ENCODE measurements at regions of chr10 and their contacts with region 1.

Region 1: DNA sequence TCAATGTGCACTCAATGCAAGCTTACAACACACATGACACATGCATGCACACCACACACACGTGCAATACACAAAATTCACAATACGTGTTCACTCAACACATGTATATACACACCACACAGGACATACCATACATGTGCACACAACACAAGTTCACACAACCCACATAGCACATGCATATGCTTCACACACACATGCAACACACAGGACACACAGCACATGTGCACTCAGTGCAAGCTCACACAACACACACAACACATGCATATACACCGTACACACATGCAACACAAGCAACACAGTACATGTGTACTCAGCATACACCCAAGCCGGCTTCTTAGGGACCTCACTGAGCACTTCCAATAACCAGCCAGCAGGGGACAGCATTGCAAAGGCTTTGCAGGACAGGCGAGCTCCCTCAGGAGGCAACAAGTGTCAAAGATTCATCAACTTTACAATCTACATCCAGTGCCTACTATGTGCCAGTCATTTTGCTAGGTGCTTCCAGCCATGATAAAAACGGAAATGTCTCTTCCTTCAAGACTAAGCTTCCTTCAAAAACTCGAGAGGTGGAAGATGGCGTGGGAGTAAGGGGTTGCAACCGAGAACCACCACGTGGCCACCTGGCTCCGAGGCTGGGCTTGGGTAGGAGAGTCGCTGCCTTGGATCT is 61.1 kb downstream of the JCAD start:
- DNase-seq: peak; percentile 68
- H3K4me3 ChIP-seq: no peak overlapping the region
- H3K27ac ChIP-seq: no peak overlapping the region
- H3K4me1 ChIP-seq: no peaks in the 10 kb centered on the region
- H3K27me3 ChIP-seq: no peaks in the 10 kb centered on the region
- CTCF ChIP-seq: peak; percentile 100

Region 2: DNA sequence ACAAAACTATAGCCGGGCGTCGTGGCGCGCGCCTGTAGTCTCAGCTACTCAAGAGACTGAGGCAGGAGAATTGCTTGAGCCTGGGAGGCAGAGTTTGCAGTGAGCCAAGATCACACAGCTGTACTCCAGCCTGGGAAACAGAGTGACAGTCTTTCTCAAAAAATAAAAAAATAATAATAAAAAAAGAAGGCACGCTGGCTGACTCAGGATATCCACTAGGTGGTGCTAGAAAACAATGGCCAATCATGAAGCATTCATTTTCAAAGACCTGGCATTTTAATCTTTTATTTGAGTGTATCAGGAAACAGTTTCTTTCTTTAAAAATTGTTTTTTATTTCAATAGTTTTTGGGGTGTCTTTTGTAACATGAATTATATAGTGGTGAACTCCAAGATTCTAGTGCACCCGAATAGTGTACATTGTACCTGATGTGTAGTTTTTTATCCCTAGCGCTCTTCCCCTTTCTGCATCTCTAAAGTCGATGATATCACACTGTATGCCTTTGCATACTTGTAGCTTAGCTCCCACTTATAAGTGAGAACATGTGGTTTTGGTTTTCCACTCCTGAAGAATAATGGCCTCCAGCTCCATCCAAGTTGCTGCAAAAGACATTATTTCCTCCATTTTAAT is 620.8 kb before region 1 on chr10:
- CTCF ChIA-PET with region 1: no interaction called
- dilution Hi-C with region 1: no loop called
- in situ Hi-C with region 1: no loop called
- intact Hi-C with region 1: loop called (anchors 5 kb)
- DNase-seq: peak; percentile 8
- H3K4me3 ChIP-seq: no peak overlapping the region
- H3K27ac ChIP-seq: no peak overlapping the region
- H3K4me1 ChIP-seq: no peaks in the 10 kb centered on the region
- H3K27me3 ChIP-seq: no peaks in the 10 kb centered on the region
- CTCF ChIP-seq: peak; percentile 75 to 76

Region 3: DNA sequence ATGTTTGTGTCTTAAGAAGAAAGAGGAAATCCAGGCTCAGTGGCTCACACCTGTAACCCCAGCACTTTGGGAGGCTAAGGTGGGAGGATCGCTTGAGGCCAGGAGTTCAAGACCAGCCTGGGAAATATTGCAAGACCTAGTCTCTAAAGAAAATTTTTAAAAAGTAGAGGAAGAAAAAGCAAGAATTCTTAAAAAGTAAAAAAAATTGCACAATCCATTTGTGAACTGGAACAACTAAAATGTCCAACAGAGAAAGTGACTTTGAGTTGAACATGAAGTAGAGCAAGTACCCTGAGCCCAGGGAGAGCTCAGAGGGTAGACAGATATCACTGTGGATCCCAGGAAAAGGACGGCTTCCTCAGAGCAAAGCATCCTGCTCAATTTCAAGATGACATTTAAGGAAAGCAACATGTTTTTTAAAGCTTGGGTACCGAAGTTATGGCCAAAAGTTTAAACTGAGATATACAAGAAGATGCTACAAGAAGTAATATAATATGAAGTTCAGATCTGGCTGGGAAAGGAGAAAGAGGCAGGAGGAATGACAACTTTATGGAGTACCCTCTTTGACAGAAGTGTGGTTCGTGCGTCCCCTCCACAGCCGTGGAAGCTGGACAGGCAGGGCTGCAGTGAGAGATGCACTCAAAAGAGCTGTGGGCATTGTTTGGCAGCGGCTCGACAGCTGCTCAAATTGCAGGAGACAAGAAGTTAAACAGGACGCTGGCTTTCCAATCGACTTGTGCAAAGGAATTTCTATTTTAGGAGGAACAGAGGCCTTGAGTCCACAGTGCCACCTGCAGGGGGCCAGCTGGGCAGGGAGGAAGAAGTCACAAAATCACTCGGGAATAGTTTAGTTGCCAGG is 140.2 kb before region 1 on chr10:
- CTCF ChIA-PET with region 1: no interaction called
- dilution Hi-C with region 1: no loop called
- in situ Hi-C with region 1: no loop called
- intact Hi-C with region 1: loop called (anchors 1 kb)
- DNase-seq: peak; percentile 84
- H3K4me3 ChIP-seq: no peak overlapping the region
- H3K27ac ChIP-seq: no peak overlapping the region
- H3K4me1 ChIP-seq: peaks cover 40% of the 10 kb centered on the region
- H3K27me3 ChIP-seq: no peaks in the 10 kb centered on the region
- CTCF ChIP-seq: peak; percentile 74 to 91

Region 4: DNA sequence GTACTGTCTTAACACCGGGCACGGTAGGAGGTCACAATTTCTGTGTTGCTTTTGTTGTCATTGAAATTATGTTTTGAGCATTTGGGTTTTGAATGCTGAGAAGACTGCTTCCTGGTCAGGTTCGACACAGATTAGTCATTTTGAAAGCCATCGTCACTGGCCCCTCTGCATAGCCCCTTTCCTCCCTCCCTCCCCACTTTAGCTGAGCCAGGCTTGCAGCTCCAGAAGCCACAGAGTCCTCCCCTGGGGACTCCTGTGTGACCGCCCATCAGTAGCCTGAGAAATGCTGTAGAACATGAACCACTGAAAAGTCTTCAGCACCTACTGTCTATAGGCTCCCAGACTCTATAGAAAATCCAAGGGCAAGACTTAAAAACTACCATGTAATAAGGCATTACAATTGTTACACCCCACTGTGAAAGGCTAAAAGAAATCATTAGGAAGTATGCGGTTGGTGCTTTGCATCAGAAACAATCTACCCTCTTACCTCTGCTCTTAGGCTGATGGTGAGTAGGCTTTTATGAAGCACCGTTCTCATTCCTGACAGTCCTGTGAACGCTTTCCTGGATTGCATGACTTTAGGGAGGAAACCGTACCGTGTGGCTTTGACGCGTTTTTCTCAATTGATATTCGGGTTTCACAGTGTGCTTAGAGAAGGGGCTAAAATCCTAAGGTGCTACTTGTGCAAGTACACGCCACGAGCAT is 36.3 kb after region 1 on chr10:
- CTCF ChIA-PET with region 1: no interaction called
- dilution Hi-C with region 1: no loop called
- in situ Hi-C with region 1: no loop called
- intact Hi-C with region 1: no loop called
- DNase-seq: no peak
- H3K4me3 ChIP-seq: no peak overlapping the region
- H3K27ac ChIP-seq: no peak overlapping the region
- H3K4me1 ChIP-seq: no peaks in the 10 kb centered on the region
- H3K27me3 ChIP-seq: no peaks in the 10 kb centered on the region
- CTCF ChIP-seq: no peak

Region 5: GRCh38 chr10:30080161-30080560 is 81.9 kb after region 1 on chr10:
- CTCF ChIA-PET with region 1: no interaction called
- dilution Hi-C with region 1: no loop called
- in situ Hi-C with region 1: no loop called
- intact Hi-C with region 1: no loop called
- DNase-seq: peak; percentile 30
- H3K4me3 ChIP-seq: no peak overlapping the region
- H3K27ac ChIP-seq: no peak overlapping the region
- H3K4me1 ChIP-seq: no peaks in the 10 kb centered on the region
- H3K27me3 ChIP-seq: peaks cover 2% of the 10 kb centered on the region
- CTCF ChIP-seq: no peak

Region 6: DNA sequence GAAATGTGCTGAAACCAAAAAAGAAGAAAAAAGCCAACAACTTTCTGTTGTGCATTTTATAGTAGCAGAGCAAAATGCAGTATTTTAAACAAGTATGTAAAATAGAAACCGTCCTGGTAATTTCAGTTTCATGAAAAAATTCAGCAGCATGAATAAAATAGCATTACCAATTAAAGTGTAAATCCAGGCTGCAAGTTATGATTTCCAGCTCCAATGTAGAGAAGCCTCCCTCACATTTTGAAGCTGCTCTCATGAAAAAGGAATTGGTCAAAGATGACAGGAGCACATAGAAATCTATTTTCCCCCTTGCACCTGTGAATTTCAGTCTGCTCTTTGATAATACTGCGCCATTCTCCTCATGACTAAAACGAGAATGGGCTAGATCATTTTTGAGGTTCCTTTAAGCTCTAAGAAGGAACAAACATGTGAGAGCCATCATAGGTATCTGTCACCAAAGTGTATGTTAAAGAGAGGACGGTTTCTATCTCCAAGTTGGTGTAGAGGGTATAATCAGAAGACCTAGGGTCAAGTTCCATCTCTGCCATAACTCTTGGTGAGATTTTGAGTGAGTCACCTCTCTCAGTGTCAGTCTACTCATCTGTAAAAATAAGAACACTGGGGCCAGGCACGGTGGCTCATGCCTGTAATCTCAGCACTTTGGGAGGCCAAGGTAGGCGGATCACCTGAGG is 243.3 kb after region 1 on chr10:
- CTCF ChIA-PET with region 1: interaction called, 6 read pairs
- dilution Hi-C with region 1: no loop called
- in situ Hi-C with region 1: loop called (anchors 10 to 25 kb)
- intact Hi-C with region 1: loop called (anchors 1 kb)
- DNase-seq: no peak
- H3K4me3 ChIP-seq: no peak overlapping the region
- H3K27ac ChIP-seq: no peak overlapping the region
- H3K4me1 ChIP-seq: no peaks in the 10 kb centered on the region
- H3K27me3 ChIP-seq: no peaks in the 10 kb centered on the region
- CTCF ChIP-seq: no peak

Region 7: DNA sequence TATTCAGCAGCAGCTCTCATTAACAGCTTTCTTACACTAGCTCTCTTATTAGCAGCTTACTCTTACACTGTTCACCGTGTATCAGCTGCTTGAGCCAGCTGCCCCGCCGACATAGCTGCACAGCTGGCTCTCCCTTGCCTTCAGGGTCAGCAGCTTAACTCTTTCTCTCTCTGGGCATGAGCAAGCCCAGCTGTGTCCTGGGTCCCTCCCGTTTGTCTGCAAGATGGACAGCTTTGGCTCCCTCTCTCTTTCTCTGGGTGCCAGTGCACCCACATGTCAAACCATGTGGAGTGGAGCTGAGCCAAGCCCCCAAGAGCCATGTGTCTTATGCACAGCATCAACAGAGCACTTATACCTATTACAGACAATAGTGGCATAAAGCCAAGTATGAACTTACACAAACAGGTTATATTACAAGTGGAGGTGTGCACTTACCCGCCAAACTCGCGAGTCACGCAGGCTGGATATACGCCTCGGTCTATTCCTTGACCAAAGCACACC is 386.5 kb after region 1 on chr10:
- CTCF ChIA-PET with region 1: no interaction called
- dilution Hi-C with region 1: no loop called
- in situ Hi-C with region 1: no loop called
- intact Hi-C with region 1: loop called (anchors 1 kb)
- DNase-seq: peak; percentile 50
- H3K4me3 ChIP-seq: no peak overlapping the region
- H3K27ac ChIP-seq: no peak overlapping the region
- H3K4me1 ChIP-seq: peaks cover 20% of the 10 kb centered on the region
- H3K27me3 ChIP-seq: peaks cover 4% of the 10 kb centered on the region
- CTCF ChIP-seq: peak; percentile 64 to 70